CD8-positive, alpha-beta T cell (primary cell): ENCODE measurements at regions of chr15 and their contacts with region 1.

Region 1: DNA sequence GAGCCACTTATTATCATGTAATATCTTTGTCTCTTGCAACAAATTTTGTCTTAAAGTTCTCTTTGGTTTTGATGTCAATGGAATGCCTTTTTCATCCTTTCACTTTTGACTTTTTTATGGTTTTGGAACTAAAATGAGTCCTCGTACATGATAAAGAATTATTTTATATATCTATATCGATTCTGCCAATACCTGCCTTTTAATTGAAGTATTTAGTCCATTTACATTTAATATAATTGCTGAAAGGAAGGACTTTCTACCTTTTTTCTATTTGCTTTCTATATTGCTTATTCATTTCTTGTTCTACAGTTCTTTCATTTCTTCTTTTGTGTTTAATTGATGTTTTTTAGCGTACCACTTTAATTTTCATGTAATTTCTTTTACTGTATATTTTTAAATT is 32.8 kb downstream of the GABRA5 start:
- DNase-seq: no peak
- ATAC-seq: no peak
- H3K4me3 ChIP-seq: no peak overlapping the region
- H3K4me3 Mint-ChIP-seq: no peak overlapping the region
- H3K27ac ChIP-seq: no peak overlapping the region
- H3K27ac Mint-ChIP-seq: no peak overlapping the region
- H3K4me1 ChIP-seq: no peaks in the 10 kb centered on the region
- H3K4me1 Mint-ChIP-seq: no peaks in the 10 kb centered on the region
- H3K27me3 ChIP-seq: no peaks in the 10 kb centered on the region
- H3K27me3 Mint-ChIP-seq: no peaks in the 10 kb centered on the region
- CTCF ChIP-seq: no peak

Region 2: DNA sequence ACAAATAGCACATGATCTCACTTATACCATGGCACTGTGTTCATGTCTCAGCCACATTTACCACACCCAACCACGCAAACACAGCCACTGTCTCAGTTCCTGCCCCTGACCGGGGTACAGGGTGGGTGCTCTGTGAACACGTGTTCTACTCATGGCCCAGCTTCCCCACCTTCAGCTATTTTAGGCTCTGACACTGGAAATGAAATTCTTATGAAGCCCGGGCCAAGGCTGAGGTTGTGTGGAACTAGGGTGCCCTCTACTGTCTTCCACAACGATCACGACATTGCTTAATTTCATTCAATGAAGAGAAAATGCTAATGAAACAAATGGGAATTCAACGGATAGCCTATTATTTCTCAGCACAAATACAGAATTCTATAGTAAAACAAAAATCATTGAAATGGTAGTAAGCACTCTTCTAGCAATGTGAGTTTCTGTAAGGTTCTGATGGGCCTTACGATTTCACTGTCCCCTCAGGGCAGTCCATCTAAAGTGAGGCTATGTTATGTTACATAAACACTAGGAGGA is 34.9 kb before region 1 on chr15:
- CTCF ChIA-PET with region 1: no interaction called
- POLR2A ChIA-PET with region 1: no interaction called
- intact Hi-C with region 1: loop called in 1 of 2 experiments (anchors 1 kb)
- DNase-seq: no peak
- ATAC-seq: no peak
- H3K4me3 ChIP-seq: no peak overlapping the region
- H3K4me3 Mint-ChIP-seq: no peak overlapping the region
- H3K27ac ChIP-seq: no peak overlapping the region
- H3K27ac Mint-ChIP-seq: no peak overlapping the region
- H3K4me1 ChIP-seq: no peaks in the 10 kb centered on the region
- H3K4me1 Mint-ChIP-seq: no peaks in the 10 kb centered on the region
- H3K27me3 ChIP-seq: no peaks in the 10 kb centered on the region
- H3K27me3 Mint-ChIP-seq: peaks cover 22% of the 10 kb centered on the region
- CTCF ChIP-seq: no peak

Region 3: DNA sequence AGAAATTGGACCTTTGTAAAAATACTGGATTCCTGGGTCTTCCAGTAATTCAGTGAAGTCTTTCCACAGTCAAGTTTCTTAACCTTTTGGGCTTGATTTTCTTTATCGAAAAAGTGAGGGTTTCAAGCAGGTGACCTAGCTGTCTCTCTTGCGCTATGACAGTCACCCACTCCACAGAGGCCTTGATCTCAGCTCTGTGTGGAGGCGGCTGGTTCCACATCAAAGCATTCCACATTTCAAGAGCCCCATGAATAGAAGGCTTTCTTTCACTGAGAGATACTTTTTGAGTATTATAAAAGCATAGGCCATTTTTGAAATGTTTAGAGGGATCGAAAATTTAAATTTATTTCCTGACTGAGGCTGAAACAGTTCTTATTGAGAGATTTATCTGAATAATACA is 11.1 kb after region 1 on chr15:
- CTCF ChIA-PET with region 1: no interaction called
- POLR2A ChIA-PET with region 1: no interaction called
- intact Hi-C with region 1: no loop called
- DNase-seq: no peak
- ATAC-seq: no peak
- H3K4me3 ChIP-seq: no peak overlapping the region
- H3K4me3 Mint-ChIP-seq: no peak overlapping the region
- H3K27ac ChIP-seq: no peak overlapping the region
- H3K27ac Mint-ChIP-seq: no peak overlapping the region
- H3K4me1 ChIP-seq: no peaks in the 10 kb centered on the region
- H3K4me1 Mint-ChIP-seq: no peaks in the 10 kb centered on the region
- H3K27me3 ChIP-seq: no peaks in the 10 kb centered on the region
- H3K27me3 Mint-ChIP-seq: no peaks in the 10 kb centered on the region
- CTCF ChIP-seq: no peak